Activated naive CD4-positive, alpha-beta T cell treated with anti-CD3 and anti-CD28 coated beads for 36 hours (primary cell): ENCODE measurements at regions of chr6 and their contacts with region 1.

Region 1: GRCh38 chr6:160462551-160463109 is 114.5 kb downstream of the SLC22A3 start:
- DNase-seq: peak; percentile 79
- H3K4me3 Mint-ChIP-seq: no peak overlapping the region
- H3K27ac Mint-ChIP-seq: peak overlapping the region; percentile 50
- H3K4me1 Mint-ChIP-seq: peaks cover 53% of the 10 kb centered on the region
- H3K27me3 Mint-ChIP-seq: peaks cover 3% of the 10 kb centered on the region

Region 2: DNA sequence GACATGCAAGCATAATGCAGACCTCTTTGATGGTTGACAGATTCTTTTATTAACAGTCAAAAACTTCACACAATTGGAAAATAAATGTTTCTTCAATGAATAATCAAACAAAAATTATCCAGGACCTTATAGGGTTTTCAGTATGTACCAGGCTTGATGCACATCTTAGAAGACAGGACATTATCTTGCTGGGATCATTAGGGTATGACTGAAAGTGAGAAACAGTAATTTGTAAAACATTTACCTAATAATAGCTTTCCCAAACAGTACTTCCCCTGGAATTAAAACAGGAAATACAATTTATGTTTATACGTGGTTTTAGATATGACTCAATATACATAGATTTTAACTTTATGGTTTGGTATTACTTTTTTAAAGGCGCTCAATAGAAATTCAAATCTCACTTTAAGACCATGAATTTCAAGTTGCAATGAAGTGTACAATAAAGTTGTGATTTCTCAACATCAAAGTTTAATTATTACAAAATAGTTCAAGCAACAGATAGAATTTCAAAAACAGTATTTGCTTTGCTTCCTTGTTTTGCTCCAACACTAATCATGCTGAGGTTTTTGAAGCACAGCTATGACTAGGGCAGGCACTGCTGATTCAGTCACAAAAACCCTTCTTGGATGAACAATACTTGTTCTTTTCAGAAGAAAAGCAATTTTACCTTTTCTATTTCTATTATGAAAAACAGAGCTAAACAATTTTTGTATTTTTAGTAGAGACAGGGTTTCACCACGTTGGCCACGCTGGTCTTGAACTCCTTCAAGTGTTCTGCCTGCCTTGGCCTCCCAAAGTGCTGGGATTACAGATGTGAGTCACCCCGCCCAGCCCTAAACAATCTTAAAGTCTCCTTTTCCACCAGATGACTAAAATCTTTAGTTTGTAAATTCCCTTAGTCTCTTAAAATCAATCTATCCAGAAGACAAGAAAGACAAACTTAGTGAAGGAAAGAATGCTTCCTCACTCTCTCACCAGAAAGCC is 783.2 kb before region 1 on chr6:
- CTCF ChIA-PET with region 1: no interaction called
- intact Hi-C with region 1: loop called (anchors 2 kb)
- DNase-seq: peak; percentile 69
- H3K4me3 Mint-ChIP-seq: peak overlapping the region; percentile 11
- H3K27ac Mint-ChIP-seq: peak overlapping the region; percentile 88
- H3K4me1 Mint-ChIP-seq: peaks cover 39% of the 10 kb centered on the region
- H3K27me3 Mint-ChIP-seq: no peaks in the 10 kb centered on the region

Region 3: GRCh38 chr6:159979136-159979874 is 483.3 kb before region 1 on chr6:
- CTCF ChIA-PET with region 1: no interaction called
- intact Hi-C with region 1: loop called (anchors 2 kb)
- DNase-seq: peak; percentile 87
- H3K4me3 Mint-ChIP-seq: peak overlapping the region; percentile 65
- H3K27ac Mint-ChIP-seq: peak overlapping the region; percentile 98
- H3K4me1 Mint-ChIP-seq: peaks cover 92% of the 10 kb centered on the region
- H3K27me3 Mint-ChIP-seq: no peaks in the 10 kb centered on the region

Region 4: GRCh38 chr6:160355001-160355400 is 107.6 kb before region 1 on chr6:
- CTCF ChIA-PET with region 1: no interaction called
- intact Hi-C with region 1: loop called (anchors 2 kb)
- DNase-seq: peak; percentile 53
- H3K4me3 Mint-ChIP-seq: no peak overlapping the region
- H3K27ac Mint-ChIP-seq: no peak overlapping the region
- H3K4me1 Mint-ChIP-seq: peaks cover 2% of the 10 kb centered on the region
- H3K27me3 Mint-ChIP-seq: peaks cover 12% of the 10 kb centered on the region